GM18951 (cell line): ENCODE measurements at regions of chr10 and their contacts with region 1.

Region 1: GRCh38 chr10:27742195-27743011 is 3.2 kb downstream of the MKX start:
- POLR2A ChIP-seq: no peak

Region 2: GRCh38 chr10:27072436-27073114 is 669.8 kb before region 1 on chr10:
- in situ Hi-C with region 1: no loop called
- POLR2A ChIP-seq: no peak

Region 3: DNA sequence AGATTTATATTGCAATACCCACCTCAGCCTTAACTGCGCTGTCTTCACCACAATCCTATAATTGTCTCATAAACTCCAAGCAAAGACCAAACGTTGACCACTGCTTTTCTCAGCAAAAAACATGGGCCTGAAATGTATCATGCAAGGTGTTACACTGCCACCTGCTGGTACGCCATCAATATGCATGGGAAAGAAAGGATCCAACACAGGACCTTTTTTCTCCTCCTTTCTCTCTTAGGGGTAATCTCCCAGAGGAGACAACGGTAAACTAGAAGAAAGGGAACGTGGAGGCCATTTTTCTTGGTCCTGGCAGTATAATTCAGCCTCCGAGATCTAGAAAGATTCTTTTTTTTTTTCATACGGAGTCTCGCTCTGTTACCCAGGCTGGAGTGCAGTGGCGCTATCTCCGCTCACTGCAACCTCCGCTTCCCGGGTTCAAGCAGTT is 639.5 kb after region 1 on chr10:
- in situ Hi-C with region 1: loop called (anchors 25 kb)
- POLR2A ChIP-seq: no peak